ENCODE measurements at regions of chr4 and their contacts with region 1.

Region 1: GRCh38 chr4:68375667-68376559 is 26.0 kb upstream of the YTHDC1 start:
- DNase-seq: peak; percentile 14 to 57 (median 48)
- ATAC-seq: peak; percentile 42 to 61
- H3K4me3 ChIP-seq: no peak overlapping the region
- H3K27ac ChIP-seq: no peak overlapping the region
- H3K4me1 ChIP-seq: peaks cover 2% of the 10 kb centered on the region
- H3K27me3 ChIP-seq: no peaks in the 10 kb centered on the region

Region 2: DNA sequence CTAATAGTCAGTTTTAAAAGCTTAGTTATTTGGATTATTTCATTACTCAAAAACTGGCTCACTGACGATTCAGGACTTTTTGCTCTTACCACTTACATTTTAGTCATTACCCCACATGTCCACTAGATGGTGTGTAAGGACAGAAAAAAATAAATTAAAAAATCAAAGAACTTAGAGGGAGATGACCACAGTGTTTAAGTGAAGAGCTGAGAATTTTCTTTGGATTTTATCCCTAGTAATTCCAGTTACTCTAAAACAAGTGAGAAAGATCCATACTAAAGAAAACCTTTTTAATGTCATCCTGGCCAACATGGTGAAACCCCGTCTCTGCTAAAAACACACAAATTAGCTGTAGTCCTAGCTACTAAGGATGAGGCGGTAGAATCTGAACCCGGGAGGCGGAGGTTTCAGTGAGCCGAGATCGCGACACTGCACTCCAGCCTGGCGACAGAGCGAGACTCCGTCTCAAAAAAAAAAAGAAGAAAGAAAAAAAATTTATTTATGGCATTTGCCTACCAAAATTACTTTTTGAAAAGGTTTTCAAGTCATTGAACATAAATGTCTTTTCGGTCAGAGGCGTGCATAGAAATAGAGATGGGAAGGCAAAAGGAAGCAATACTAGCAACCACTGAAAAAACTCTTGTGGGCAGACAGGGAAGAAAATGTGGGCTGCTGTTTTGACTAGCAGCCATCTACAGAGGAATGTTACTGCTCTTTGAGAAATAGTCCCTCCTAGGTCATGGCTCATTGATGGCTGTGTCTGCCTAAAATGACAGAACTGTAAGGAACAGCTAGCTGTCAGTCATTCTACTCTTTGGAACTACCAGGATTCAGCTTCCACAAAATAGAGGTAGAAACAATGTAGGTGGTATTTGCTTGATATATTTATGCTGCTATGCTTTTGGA is 103.8 kb before region 1 on chr4:
- intact Hi-C with region 1: loop called (anchors 2 to 5 kb)
- DNase-seq: no peak
- ATAC-seq: peak in 1 of 2 donors; percentile 50
- H3K4me3 ChIP-seq: peak overlapping the region; percentile 39
- H3K27ac ChIP-seq: no peak overlapping the region
- H3K4me1 ChIP-seq: no peaks in the 10 kb centered on the region
- H3K27me3 ChIP-seq: no peaks in the 10 kb centered on the region